ENCODE measurements at regions of chr6 and their contacts with region 1.

Region 1: GRCh38 chr6:148177589-148178233 is 164.9 kb upstream of the SASH1 start:
- DNase-seq: peak; percentile 31
- ATAC-seq: peak; percentile 80
- H3K4me3 ChIP-seq: no peak overlapping the region
- H3K27ac ChIP-seq: no peak overlapping the region
- H3K4me1 ChIP-seq: no peaks in the 10 kb centered on the region
- H3K27me3 ChIP-seq: no peaks in the 10 kb centered on the region
- CTCF ChIP-seq: peak; percentile 76 to 90 (median 83)
- POLR2A ChIP-seq: no peak
- RAD21 ChIP-seq: peak; percentile 83

Region 2: GRCh38 chr6:148140772-148141557 is 36.7 kb before region 1 on chr6:
- CTCF ChIA-PET with region 1: no interaction called
- POLR2A ChIA-PET with region 1: no interaction called
- RAD21 ChIA-PET with region 1: no interaction called
- intact Hi-C with region 1: no loop called
- DNase-seq: no peak
- ATAC-seq: no peak
- H3K4me3 ChIP-seq: no peak overlapping the region
- H3K27ac ChIP-seq: no peak overlapping the region
- H3K4me1 ChIP-seq: peaks cover under 1 to 8% of the 10 kb centered on the region in 2 experiments; a peak in 3 of 4 replicates
- H3K27me3 ChIP-seq: no peaks in the 10 kb centered on the region
- CTCF ChIP-seq: no peak
- POLR2A ChIP-seq: no peak
- RAD21 ChIP-seq: no peak

Region 3: DNA sequence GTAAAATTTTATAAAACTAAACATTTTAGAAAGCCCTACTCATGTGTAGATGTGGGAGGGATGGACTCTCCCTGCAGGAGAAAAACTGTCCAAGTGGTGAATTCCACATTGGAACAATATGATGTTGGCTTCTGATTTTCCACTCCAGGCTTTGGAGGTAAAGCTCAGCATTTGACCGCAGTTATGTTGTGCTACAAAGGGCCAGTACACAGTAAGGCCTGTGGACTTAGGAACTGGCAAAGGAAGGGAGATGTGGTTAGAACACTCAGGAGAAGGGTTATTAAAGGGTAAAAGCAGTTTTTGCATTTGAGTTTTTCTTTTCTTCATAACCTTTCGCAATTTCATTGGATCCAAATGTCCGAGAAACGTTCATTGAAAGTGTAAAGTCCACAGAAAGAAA is 14.6 kb after region 1 on chr6:
- CTCF ChIA-PET with region 1: interaction called, 18 read pairs
- POLR2A ChIA-PET with region 1: no interaction called
- RAD21 ChIA-PET with region 1: no interaction called
- intact Hi-C with region 1: no loop called
- DNase-seq: no peak
- ATAC-seq: 0 out of 2 replicates have a peak, but pooled peaks have one; percentile 20
- H3K4me3 ChIP-seq: no peak overlapping the region
- H3K27ac ChIP-seq: no peak overlapping the region
- H3K4me1 ChIP-seq: peaks cover 14 to 23% of the 10 kb centered on the region in 2 experiments
- H3K27me3 ChIP-seq: no peaks in the 10 kb centered on the region
- CTCF ChIP-seq: no peak
- POLR2A ChIP-seq: no peak
- RAD21 ChIP-seq: no peak

Region 4: GRCh38 chr6:148250975-148251685 is 73.4 kb after region 1 on chr6:
- CTCF ChIA-PET with region 1: interaction called, 12 read pairs
- POLR2A ChIA-PET with region 1: no interaction called
- RAD21 ChIA-PET with region 1: no interaction called
- intact Hi-C with region 1: loop called (anchors 1 kb)
- DNase-seq: no peak
- ATAC-seq: peak; percentile 49; the same call in 1 of the 2 replicates
- H3K4me3 ChIP-seq: no peak overlapping the region
- H3K27ac ChIP-seq: no peak overlapping the region
- H3K4me1 ChIP-seq: no peaks in the 10 kb centered on the region
- H3K27me3 ChIP-seq: no peaks in the 10 kb centered on the region
- CTCF ChIP-seq: peak in 2 of 3 experiments; percentile 42 to 49; a peak in 2 of 6 replicates
- POLR2A ChIP-seq: no peak
- RAD21 ChIP-seq: peak; percentile 69

Region 5: DNA sequence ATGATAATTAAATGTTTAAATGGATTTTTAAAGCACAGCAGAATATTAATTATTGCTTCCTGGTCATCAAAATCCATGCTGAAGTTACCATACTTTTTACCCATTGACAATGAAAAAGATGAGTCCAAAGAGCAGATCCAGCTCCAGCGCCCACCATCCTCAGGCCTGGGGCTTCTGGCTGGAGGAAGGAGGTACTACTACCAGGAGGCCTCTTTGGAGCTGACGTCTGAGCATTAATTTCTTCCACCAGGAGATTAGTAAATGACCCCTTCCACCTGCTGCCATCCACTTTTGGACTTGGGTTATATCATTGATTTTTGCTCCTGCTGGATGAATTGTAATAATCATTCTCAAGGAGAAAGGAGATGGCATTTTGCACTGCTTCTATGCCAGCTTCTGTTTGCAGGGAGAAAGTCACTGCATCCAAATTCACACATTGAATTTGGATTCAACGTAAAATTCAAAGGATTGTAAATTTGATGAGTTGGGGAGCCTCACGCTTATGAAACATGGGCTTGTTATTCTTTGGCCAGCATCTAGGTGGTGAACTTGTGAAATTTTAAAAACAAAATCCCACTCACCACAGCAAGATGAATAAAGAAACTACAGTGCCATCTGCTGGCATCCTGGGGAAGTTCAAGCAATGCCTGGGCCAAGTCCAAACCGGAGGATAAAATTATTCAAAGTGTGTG is 286.8 kb after region 1 on chr6:
- CTCF ChIA-PET with region 1: interaction called, 18 read pairs
- POLR2A ChIA-PET with region 1: no interaction called
- RAD21 ChIA-PET with region 1: interaction called in 1 of 2 experiments, 3 read pairs
- intact Hi-C with region 1: loop called (anchors 1 kb)
- DNase-seq: peak; percentile 48
- ATAC-seq: peak; percentile 88
- H3K4me3 ChIP-seq: no peak overlapping the region
- H3K27ac ChIP-seq: no peak overlapping the region
- H3K4me1 ChIP-seq: no peaks in the 10 kb centered on the region
- H3K27me3 ChIP-seq: no peaks in the 10 kb centered on the region
- CTCF ChIP-seq: peak; percentile 85 to 97 (median 96)
- POLR2A ChIP-seq: no peak
- RAD21 ChIP-seq: peak; percentile 93

Measured in HCT116 (cell line).